ENCODE measurements at regions of chr14 and their contacts with region 1.

Region 1: GRCh38 chr14:75307700-75308379 is 29.2 kb downstream of the FOS start:
- DNase-seq: no peak
- H3K4me3 ChIP-seq: no peak overlapping the region
- H3K27ac ChIP-seq: no peak overlapping the region
- H3K4me1 ChIP-seq: peaks cover 15 to 41% (median 16%) of the 10 kb centered on the region in 3 donors
- H3K27me3 ChIP-seq: no peaks in the 10 kb centered on the region
- CTCF ChIP-seq: peak; percentile 88 to 95 (median 94)
- POLR2A ChIP-seq: no peak

Region 2: DNA sequence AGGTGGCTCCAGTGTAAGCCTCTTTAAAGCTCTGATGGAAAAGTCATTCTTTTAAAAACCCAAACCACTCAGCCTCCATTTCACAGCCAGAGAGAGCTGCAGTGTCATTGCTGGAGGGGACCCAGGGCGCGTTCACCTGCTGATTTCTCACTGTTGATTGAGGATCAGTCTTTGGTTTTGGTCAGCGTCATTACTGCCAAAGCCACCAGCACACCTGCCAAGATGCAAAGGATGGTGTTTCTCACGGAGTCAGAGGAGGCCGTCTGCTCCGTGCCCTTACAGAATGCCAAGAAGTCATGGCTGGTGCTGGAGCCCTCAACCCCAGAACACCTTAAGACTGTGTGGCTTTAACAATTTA is 181.6 kb after region 1 on chr14:
- intact Hi-C with region 1: loop called (anchors 2 kb)
- DNase-seq: no peak
- H3K4me3 ChIP-seq: no peak overlapping the region
- H3K27ac ChIP-seq: no peak overlapping the region
- H3K4me1 ChIP-seq: peaks cover 0 to 7% (median 0%) of the 10 kb centered on the region in 3 donors
- H3K27me3 ChIP-seq: peaks cover 0 to 3% (median 0%) of the 10 kb centered on the region in 4 donors
- CTCF ChIP-seq: no peak
- POLR2A ChIP-seq: no peak

Region 3: DNA sequence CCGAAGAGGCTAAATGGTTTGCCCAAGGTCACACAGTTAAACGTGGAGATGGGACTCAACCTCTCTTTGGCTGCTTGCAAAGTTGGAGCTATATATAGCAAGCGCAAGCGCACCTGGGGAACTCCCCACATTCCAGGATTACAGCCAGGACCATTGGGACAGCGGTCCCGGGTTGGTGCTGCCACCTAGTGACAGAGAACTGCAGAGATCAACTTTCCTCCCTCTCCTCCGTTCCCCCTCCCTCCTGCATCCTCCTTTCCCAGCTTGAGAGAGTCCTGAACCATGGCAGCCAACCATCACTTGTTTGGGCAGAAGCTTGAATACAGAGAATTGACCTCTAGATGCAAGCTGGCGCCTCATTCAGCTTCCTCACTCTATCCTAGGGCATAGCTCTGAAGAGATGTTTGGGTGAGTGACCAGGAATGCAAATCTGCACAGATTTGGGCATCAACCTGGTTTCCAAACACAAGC is 253.2 kb after region 1 on chr14:
- intact Hi-C with region 1: loop called (anchors 10 kb)
- DNase-seq: no peak
- H3K4me3 ChIP-seq: no peak overlapping the region
- H3K27ac ChIP-seq: no peak overlapping the region
- H3K4me1 ChIP-seq: peaks cover 7 to 20% (median 11%) of the 10 kb centered on the region in 3 donors
- H3K27me3 ChIP-seq: no peaks in the 10 kb centered on the region
- CTCF ChIP-seq: peak; percentile 58 to 90 (median 78)
- POLR2A ChIP-seq: no peak